Naive thymus-derived CD4-positive, alpha-beta T cell (primary cell): ENCODE measurements at regions of chr12 and their contacts with region 1.

Region 1: GRCh38 chr12:71415336-71416231 is 24.0 kb upstream of the LGR5 start:
- DNase-seq: peak in 7 of 9 donors; percentile 17 to 66 (median 55)
- ATAC-seq: peak; percentile 70
- H3K4me3 ChIP-seq: no peak overlapping the region
- H3K4me3 Mint-ChIP-seq: no peak overlapping the region
- H3K27ac ChIP-seq: no peak overlapping the region
- H3K27ac Mint-ChIP-seq: no peak overlapping the region
- H3K4me1 ChIP-seq: no peaks in the 10 kb centered on the region
- H3K4me1 Mint-ChIP-seq: no peaks in the 10 kb centered on the region
- H3K27me3 ChIP-seq: no peaks in the 10 kb centered on the region
- H3K27me3 Mint-ChIP-seq: peaks cover 2 to 20% (median 18%) of the 10 kb centered on the region in 5 donors

Region 2: GRCh38 chr12:70733385-70733784 is 682.2 kb before region 1 on chr12:
- CTCF ChIA-PET with region 1: no interaction called
- POLR2A ChIA-PET with region 1: no interaction called
- intact Hi-C with region 1: loop called in 1 of 2 experiments (anchors 10 kb)
- DNase-seq: peak in 2 of 9 donors; percentile 8 to 30
- ATAC-seq: peak; percentile 57
- H3K4me3 ChIP-seq: no peak overlapping the region
- H3K4me3 Mint-ChIP-seq: no peak overlapping the region
- H3K27ac ChIP-seq: no peak overlapping the region
- H3K27ac Mint-ChIP-seq: no peak overlapping the region
- H3K4me1 ChIP-seq: no peaks in the 10 kb centered on the region
- H3K4me1 Mint-ChIP-seq: peaks cover 0 to 2% (median 0%) of the 10 kb centered on the region in 7 donors
- H3K27me3 ChIP-seq: no peaks in the 10 kb centered on the region
- H3K27me3 Mint-ChIP-seq: peaks cover 0 to 23% (median 6%) of the 10 kb centered on the region in 5 donors

Region 3: GRCh38 chr12:71208053-71208685 is 207.4 kb before region 1 on chr12:
- CTCF ChIA-PET with region 1: no interaction called
- POLR2A ChIA-PET with region 1: no interaction called
- intact Hi-C with region 1: no loop called
- DNase-seq: no peak
- ATAC-seq: no peak
- H3K4me3 ChIP-seq: no peak overlapping the region
- H3K4me3 Mint-ChIP-seq: no peak overlapping the region
- H3K27ac ChIP-seq: no peak overlapping the region
- H3K27ac Mint-ChIP-seq: no peak overlapping the region
- H3K4me1 ChIP-seq: no peaks in the 10 kb centered on the region
- H3K4me1 Mint-ChIP-seq: no peaks in the 10 kb centered on the region
- H3K27me3 ChIP-seq: no peaks in the 10 kb centered on the region
- H3K27me3 Mint-ChIP-seq: peaks cover 0 to 4% (median 0%) of the 10 kb centered on the region in 5 donors

Region 4: DNA sequence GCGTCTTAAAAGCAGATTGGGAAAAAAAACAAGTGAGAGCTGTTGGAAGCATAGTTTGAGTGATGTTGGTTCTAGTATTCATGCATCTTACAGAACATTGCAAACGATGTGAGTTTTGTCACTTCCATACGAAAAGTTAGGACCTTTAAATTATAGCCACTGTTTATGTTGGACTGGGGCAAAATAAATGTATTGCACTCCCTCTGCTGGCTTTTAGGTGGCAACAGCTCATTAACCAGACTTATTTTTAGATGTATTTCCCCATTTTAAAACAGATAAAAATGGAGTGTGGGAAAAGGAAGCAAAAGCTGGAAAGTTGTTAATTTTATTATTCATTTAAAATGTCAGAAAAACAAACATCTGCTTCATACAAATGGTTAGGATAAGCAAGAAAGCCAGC is 135.9 kb after region 1 on chr12:
- CTCF ChIA-PET with region 1: interaction called, 3 read pairs
- POLR2A ChIA-PET with region 1: no interaction called
- intact Hi-C with region 1: loop called (anchors 1 kb)
- DNase-seq: peak in 3 of 9 donors; percentile 6 to 11 (median 9)
- ATAC-seq: no peak
- H3K4me3 ChIP-seq: no peak overlapping the region
- H3K4me3 Mint-ChIP-seq: no peak overlapping the region
- H3K27ac ChIP-seq: no peak overlapping the region
- H3K27ac Mint-ChIP-seq: no peak overlapping the region
- H3K4me1 ChIP-seq: no peaks in the 10 kb centered on the region
- H3K4me1 Mint-ChIP-seq: peaks cover 0 to 4% (median 0%) of the 10 kb centered on the region in 7 donors
- H3K27me3 ChIP-seq: no peaks in the 10 kb centered on the region
- H3K27me3 Mint-ChIP-seq: peaks cover 0 to 5% (median 3%) of the 10 kb centered on the region in 5 donors

Region 5: GRCh38 chr12:71636704-71637115 is 221.1 kb after region 1 on chr12:
- CTCF ChIA-PET with region 1: interaction called, 7 read pairs
- POLR2A ChIA-PET with region 1: no interaction called
- intact Hi-C with region 1: loop called (anchors 1 kb)
- DNase-seq: peak in 7 of 9 donors; percentile 27 to 65 (median 58)
- ATAC-seq: peak; percentile 84
- H3K4me3 ChIP-seq: no peak overlapping the region
- H3K4me3 Mint-ChIP-seq: no peak overlapping the region
- H3K27ac ChIP-seq: no peak overlapping the region
- H3K27ac Mint-ChIP-seq: peak overlapping the region in 8 of 9 donors; percentile 8 to 91 (median 59)
- H3K4me1 ChIP-seq: no peaks in the 10 kb centered on the region
- H3K4me1 Mint-ChIP-seq: peaks cover 0 to 18% (median 12%) of the 10 kb centered on the region in 7 donors
- H3K27me3 ChIP-seq: no peaks in the 10 kb centered on the region
- H3K27me3 Mint-ChIP-seq: no peaks in the 10 kb centered on the region

Region 6: DNA sequence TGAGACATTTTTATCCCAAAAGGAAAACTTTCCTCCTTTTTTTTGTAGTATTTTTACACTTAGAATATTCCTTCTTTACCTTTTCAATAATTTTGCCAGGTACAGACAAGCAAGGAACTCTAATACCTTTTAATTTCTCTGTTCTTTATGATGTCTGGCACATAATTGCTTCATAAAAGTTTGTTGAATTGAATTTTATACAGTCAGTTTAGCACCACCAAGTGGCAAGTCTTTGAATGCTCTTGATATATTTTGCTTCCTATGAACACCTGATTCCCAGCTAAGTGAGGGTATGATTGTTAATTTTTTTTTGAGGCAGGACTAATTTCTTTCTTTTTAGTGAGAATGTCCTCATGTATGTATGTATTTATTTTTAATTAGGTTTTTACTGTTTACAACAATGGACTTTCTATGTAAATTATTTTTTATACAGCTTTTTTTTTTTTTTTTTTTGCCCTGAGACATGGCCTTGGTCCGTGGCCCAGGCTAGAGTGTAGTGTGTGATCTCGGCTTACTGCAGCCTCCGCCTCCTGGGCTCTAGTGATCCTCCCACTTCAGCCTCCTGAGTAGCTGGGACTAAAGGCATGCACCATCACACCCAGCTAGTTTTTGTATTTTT is 430.8 kb after region 1 on chr12:
- CTCF ChIA-PET with region 1: interaction called, 3 read pairs
- POLR2A ChIA-PET with region 1: no interaction called
- intact Hi-C with region 1: loop called in 1 of 2 experiments (anchors 5 kb)
- DNase-seq: peak in 7 of 9 donors; percentile 21 to 59 (median 44)
- ATAC-seq: peak; percentile 70
- H3K4me3 ChIP-seq: no peak overlapping the region
- H3K4me3 Mint-ChIP-seq: peak overlapping the region in 3 of 10 donors; percentile 2 to 17 (median 5)
- H3K27ac ChIP-seq: peak overlapping the region; percentile 11
- H3K27ac Mint-ChIP-seq: peak overlapping the region in 6 of 9 donors; percentile 8 to 81 (median 40)
- H3K4me1 ChIP-seq: peaks cover 5 to 15% of the 10 kb centered on the region in 2 donors
- H3K4me1 Mint-ChIP-seq: peaks cover 17 to 53% (median 35%) of the 10 kb centered on the region in 7 donors
- H3K27me3 ChIP-seq: no peaks in the 10 kb centered on the region
- H3K27me3 Mint-ChIP-seq: no peaks in the 10 kb centered on the region